Naive thymus-derived CD4-positive, alpha-beta T cell (primary cell): ENCODE measurements at regions of chr6 and their contacts with region 1.

Region 1: GRCh38 chr6:118724211-118724610 is 72.8 kb upstream of the CEP85L start:
- DNase-seq: peak in 1 of 9 donors; percentile 34
- ATAC-seq: no peak
- H3K4me3 ChIP-seq: peak overlapping the region; percentile 10
- H3K4me3 Mint-ChIP-seq: peak overlapping the region in 7 of 10 donors; percentile 49 to 78 (median 60)
- H3K27ac ChIP-seq: no peak overlapping the region
- H3K27ac Mint-ChIP-seq: peak overlapping the region in 8 of 9 donors; percentile 17 to 99 (median 60)
- H3K4me1 ChIP-seq: peaks cover 18 to 55% of the 10 kb centered on the region in 2 donors
- H3K4me1 Mint-ChIP-seq: peaks cover 40 to 93% (median 80%) of the 10 kb centered on the region in 7 donors
- H3K27me3 ChIP-seq: no peaks in the 10 kb centered on the region
- H3K27me3 Mint-ChIP-seq: no peaks in the 10 kb centered on the region

Region 2: GRCh38 chr6:118618679-118619377 is 105.4 kb before region 1 on chr6:
- CTCF ChIA-PET with region 1: no interaction called
- POLR2A ChIA-PET with region 1: interaction called, 3 read pairs
- intact Hi-C with region 1: loop called in 1 of 2 experiments (anchors 1 kb)
- DNase-seq: peak; percentile 36 to 70 (median 55)
- ATAC-seq: peak; percentile 92
- H3K4me3 ChIP-seq: no peak overlapping the region
- H3K4me3 Mint-ChIP-seq: peak overlapping the region in 3 of 10 donors; percentile 2 to 52 (median 46)
- H3K27ac ChIP-seq: no peak overlapping the region
- H3K27ac Mint-ChIP-seq: peak overlapping the region; percentile 26 to 96 (median 79)
- H3K4me1 ChIP-seq: peaks cover 0 to 8% of the 10 kb centered on the region in 2 donors
- H3K4me1 Mint-ChIP-seq: peaks cover 21 to 86% (median 77%) of the 10 kb centered on the region in 7 donors
- H3K27me3 ChIP-seq: no peaks in the 10 kb centered on the region
- H3K27me3 Mint-ChIP-seq: no peaks in the 10 kb centered on the region

Region 3: GRCh38 chr6:118651282-118652050 is 72.7 kb before region 1 on chr6 and contains the start of gene CEP85L:
- CTCF ChIA-PET with region 1: no interaction called
- POLR2A ChIA-PET with region 1: interaction called, 4 read pairs
- intact Hi-C with region 1: loop called in 1 of 2 experiments (anchors 1 kb)
- DNase-seq: peak; percentile 84 to 91 (median 89)
- ATAC-seq: peak; percentile 96
- H3K4me3 ChIP-seq: peak within 1 kb of the TSS; percentile 66
- H3K4me3 Mint-ChIP-seq: peak within 1 kb of the TSS; percentile 91 to 97 (median 94)
- H3K27ac ChIP-seq: peak within 1 kb of the TSS; percentile 87
- H3K27ac Mint-ChIP-seq: peak within 1 kb of the TSS; percentile 88 to 99 (median 94)
- H3K4me1 ChIP-seq: peaks cover 32 to 40% of the 10 kb centered on the region in 2 donors
- H3K4me1 Mint-ChIP-seq: peaks cover 33 to 73% (median 59%) of the 10 kb centered on the region in 7 donors
- H3K27me3 ChIP-seq: no peaks in the 10 kb centered on the region
- H3K27me3 Mint-ChIP-seq: no peaks in the 10 kb centered on the region
- total RNA-seq, gene CEP85L: 51.1 to 89.1 (median 78.6) TPM

Region 4: DNA sequence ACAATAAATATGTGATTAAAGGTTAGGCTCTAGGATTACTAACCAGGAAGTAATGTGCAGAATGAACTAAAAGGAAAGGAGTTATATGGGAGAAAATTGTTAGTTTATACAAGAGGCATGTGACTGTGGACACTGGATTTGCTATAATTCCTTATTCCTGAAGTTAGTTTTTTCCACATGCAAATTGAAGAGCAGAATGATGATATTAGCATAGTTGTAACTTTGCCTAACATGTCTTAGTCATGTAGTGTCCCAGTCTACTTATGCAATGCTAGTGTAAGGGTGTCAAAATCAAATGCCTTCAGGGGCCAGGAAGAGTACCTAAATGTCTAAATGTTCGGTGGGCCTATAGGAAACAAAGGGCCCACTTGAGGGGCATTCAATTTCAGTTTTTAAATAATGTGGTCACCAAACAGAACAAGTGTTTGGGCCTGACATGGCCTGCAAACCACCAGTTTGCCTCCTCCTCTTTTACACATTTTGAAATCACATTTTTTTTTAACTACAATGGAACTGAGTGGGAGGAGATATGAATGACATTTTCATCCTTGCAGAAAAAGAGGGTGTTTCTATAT is 44.8 kb before region 1 on chr6:
- CTCF ChIA-PET with region 1: no interaction called
- POLR2A ChIA-PET with region 1: interaction called, 4 read pairs
- intact Hi-C with region 1: loop called in 1 of 2 experiments (anchors 5 kb)
- DNase-seq: no peak
- ATAC-seq: no peak
- H3K4me3 ChIP-seq: no peak overlapping the region
- H3K4me3 Mint-ChIP-seq: peak overlapping the region in 6 of 10 donors; percentile 18 to 39 (median 33)
- H3K27ac ChIP-seq: no peak overlapping the region
- H3K27ac Mint-ChIP-seq: peak overlapping the region in 5 of 9 donors; percentile 18 to 90 (median 50)
- H3K4me1 ChIP-seq: peaks cover 11 to 30% of the 10 kb centered on the region in 2 donors
- H3K4me1 Mint-ChIP-seq: peaks cover 45 to 91% (median 84%) of the 10 kb centered on the region in 7 donors
- H3K27me3 ChIP-seq: no peaks in the 10 kb centered on the region
- H3K27me3 Mint-ChIP-seq: no peaks in the 10 kb centered on the region

Region 5: DNA sequence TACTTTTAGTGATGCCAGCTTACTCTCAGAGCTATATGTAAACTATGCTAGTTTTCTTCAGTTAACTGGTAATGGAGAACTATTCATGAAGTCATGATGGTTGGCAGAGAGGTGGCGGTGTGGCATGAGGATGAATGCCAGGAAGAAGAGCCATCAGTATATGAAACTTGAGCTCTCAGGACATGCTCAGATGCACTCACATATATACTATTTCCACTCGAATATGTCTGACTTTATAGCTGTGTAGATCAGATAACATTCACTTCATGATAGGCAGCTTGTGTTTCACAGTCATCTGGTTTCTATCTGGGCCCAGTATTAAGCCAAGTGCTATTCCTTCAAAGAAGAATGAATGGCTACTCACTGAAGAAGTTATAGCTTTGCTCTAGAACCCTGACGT is 26.7 kb before region 1 on chr6:
- CTCF ChIA-PET with region 1: interaction called, 3 read pairs
- POLR2A ChIA-PET with region 1: interaction called, 3 read pairs
- intact Hi-C with region 1: loop called in 1 of 2 experiments (anchors 1 kb)
- DNase-seq: peak in 1 of 9 donors; percentile 24
- ATAC-seq: peak; percentile 37
- H3K4me3 ChIP-seq: no peak overlapping the region
- H3K4me3 Mint-ChIP-seq: peak overlapping the region in 3 of 10 donors; percentile 12 to 49 (median 15)
- H3K27ac ChIP-seq: no peak overlapping the region
- H3K27ac Mint-ChIP-seq: peak overlapping the region in 6 of 9 donors; percentile 17 to 75 (median 54)
- H3K4me1 ChIP-seq: peaks cover 0 to 6% of the 10 kb centered on the region in 2 donors
- H3K4me1 Mint-ChIP-seq: peaks cover 39 to 98% (median 85%) of the 10 kb centered on the region in 7 donors
- H3K27me3 ChIP-seq: no peaks in the 10 kb centered on the region
- H3K27me3 Mint-ChIP-seq: no peaks in the 10 kb centered on the region

Region 6: GRCh38 chr6:118768904-118769325 is 44.7 kb after region 1 on chr6:
- CTCF ChIA-PET with region 1: no interaction called
- POLR2A ChIA-PET with region 1: interaction called, 3 read pairs
- intact Hi-C with region 1: loop called in 1 of 2 experiments (anchors 2 kb)
- DNase-seq: peak in 7 of 9 donors; percentile 26 to 56 (median 35)
- ATAC-seq: peak; percentile 65
- H3K4me3 ChIP-seq: peak overlapping the region; percentile 20
- H3K4me3 Mint-ChIP-seq: peak overlapping the region; percentile 30 to 70 (median 48)
- H3K27ac ChIP-seq: peak overlapping the region; percentile 33
- H3K27ac Mint-ChIP-seq: peak overlapping the region; percentile 43 to 88 (median 78)
- H3K4me1 ChIP-seq: peaks cover 10 to 12% of the 10 kb centered on the region in 2 donors
- H3K4me1 Mint-ChIP-seq: peaks cover 15 to 38% (median 26%) of the 10 kb centered on the region in 7 donors
- H3K27me3 ChIP-seq: no peaks in the 10 kb centered on the region
- H3K27me3 Mint-ChIP-seq: no peaks in the 10 kb centered on the region

Region 7: DNA sequence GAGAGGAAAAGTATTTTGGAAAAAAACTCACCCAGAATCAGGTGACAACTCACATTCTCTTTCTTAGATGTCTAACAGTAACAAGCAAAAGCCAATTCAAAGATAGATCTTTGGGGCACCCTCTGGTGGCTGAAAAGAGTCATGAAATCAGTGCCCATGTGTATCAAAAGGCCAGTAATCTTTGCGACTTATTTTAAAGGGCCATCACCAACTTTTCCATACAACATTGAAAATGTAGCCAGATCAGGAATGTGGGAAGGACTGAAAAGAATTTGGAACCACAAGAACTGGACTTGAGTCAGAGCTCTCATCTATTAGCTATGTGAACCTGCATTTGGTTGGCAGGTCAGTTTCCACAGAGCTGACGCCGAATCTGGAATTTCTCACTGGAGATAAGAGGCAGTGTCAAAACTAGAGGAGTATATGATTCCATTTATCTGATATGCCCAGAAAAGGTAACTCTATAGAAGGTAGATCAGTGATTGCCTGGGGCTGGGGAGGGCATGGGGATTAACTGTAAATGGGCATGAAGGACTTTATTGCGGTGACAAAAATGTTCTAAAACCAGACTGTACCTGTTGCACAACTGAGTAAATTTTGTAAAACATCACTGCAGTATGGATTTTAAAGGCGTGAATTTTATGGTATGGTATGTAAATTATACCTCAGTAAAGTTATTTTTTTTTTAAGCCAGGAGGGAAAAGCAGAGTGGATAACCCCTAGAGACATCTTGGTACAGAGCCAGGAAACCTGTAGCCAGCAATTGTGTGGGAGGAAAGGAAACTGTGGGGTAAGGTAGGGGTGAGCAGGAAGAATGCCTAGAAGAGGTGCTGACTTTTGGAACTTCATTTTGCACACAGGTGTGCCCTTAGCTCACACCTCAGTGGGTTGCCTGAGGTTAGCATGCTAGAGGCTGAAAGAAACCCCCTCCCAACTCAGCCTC is 52.7 kb after region 1 on chr6:
- CTCF ChIA-PET with region 1: no interaction called
- POLR2A ChIA-PET with region 1: interaction called, 3 read pairs
- intact Hi-C with region 1: loop called (anchors 2 to 5 kb)
- DNase-seq: peak in 8 of 9 donors; percentile 42 to 77 (median 65)
- ATAC-seq: peak; percentile 92
- H3K4me3 ChIP-seq: no peak overlapping the region
- H3K4me3 Mint-ChIP-seq: peak overlapping the region; percentile 1 to 75 (median 48)
- H3K27ac ChIP-seq: no peak overlapping the region
- H3K27ac Mint-ChIP-seq: peak overlapping the region in 8 of 9 donors; percentile 12 to 87 (median 75)
- H3K4me1 ChIP-seq: peaks cover 4 to 11% of the 10 kb centered on the region in 2 donors
- H3K4me1 Mint-ChIP-seq: peaks cover 16 to 31% (median 23%) of the 10 kb centered on the region in 7 donors
- H3K27me3 ChIP-seq: no peaks in the 10 kb centered on the region
- H3K27me3 Mint-ChIP-seq: peaks cover 0 to 17% (median 0%) of the 10 kb centered on the region in 5 donors

Region 8: DNA sequence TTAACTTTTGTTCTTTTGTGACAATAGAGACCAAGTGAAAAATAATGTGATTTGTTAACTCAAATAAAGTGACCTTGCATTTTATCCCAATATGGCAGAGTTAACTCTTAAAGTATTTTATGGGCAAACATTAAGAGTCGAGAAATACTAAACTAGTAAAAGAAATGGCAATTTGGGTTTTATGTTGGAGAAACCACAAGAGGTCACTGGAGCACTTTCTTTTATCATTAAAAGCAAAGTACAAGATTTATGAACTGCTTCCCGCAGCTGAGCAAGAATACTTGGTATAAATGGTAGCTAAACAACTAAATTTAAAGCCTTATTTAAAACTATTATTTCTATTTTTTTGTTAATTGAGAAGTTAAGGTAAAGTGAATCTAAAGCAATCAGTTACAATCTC is 244.2 kb after region 1 on chr6:
- CTCF ChIA-PET with region 1: no interaction called
- POLR2A ChIA-PET with region 1: no interaction called
- intact Hi-C with region 1: no loop called
- DNase-seq: peak in 6 of 9 donors; percentile 8 to 35 (median 24)
- ATAC-seq: no peak
- H3K4me3 ChIP-seq: no peak overlapping the region
- H3K4me3 Mint-ChIP-seq: no peak overlapping the region
- H3K27ac ChIP-seq: no peak overlapping the region
- H3K27ac Mint-ChIP-seq: no peak overlapping the region
- H3K4me1 ChIP-seq: no peaks in the 10 kb centered on the region
- H3K4me1 Mint-ChIP-seq: peaks cover 0 to 4% (median 0%) of the 10 kb centered on the region in 7 donors
- H3K27me3 ChIP-seq: no peaks in the 10 kb centered on the region
- H3K27me3 Mint-ChIP-seq: no peaks in the 10 kb centered on the region

Region 9: GRCh38 chr6:119294984-119295383 is 570.8 kb after region 1 on chr6:
- CTCF ChIA-PET with region 1: no interaction called
- POLR2A ChIA-PET with region 1: no interaction called
- intact Hi-C with region 1: no loop called
- DNase-seq: no peak
- ATAC-seq: no peak
- H3K4me3 ChIP-seq: no peak overlapping the region
- H3K4me3 Mint-ChIP-seq: peak overlapping the region in 1 of 10 donors; percentile 2
- H3K27ac ChIP-seq: no peak overlapping the region
- H3K27ac Mint-ChIP-seq: peak overlapping the region in 1 of 9 donors; percentile 54
- H3K4me1 ChIP-seq: no peaks in the 10 kb centered on the region
- H3K4me1 Mint-ChIP-seq: peaks cover 0 to 32% (median 7%) of the 10 kb centered on the region in 7 donors
- H3K27me3 ChIP-seq: no peaks in the 10 kb centered on the region
- H3K27me3 Mint-ChIP-seq: no peaks in the 10 kb centered on the region